Activated CD4-positive, alpha-beta T cell treated with anti-CD3 and anti-CD28 coated beads for 36 hours (primary cell): ENCODE measurements at regions of chr9 and their contacts with region 1.

Region 1: DNA sequence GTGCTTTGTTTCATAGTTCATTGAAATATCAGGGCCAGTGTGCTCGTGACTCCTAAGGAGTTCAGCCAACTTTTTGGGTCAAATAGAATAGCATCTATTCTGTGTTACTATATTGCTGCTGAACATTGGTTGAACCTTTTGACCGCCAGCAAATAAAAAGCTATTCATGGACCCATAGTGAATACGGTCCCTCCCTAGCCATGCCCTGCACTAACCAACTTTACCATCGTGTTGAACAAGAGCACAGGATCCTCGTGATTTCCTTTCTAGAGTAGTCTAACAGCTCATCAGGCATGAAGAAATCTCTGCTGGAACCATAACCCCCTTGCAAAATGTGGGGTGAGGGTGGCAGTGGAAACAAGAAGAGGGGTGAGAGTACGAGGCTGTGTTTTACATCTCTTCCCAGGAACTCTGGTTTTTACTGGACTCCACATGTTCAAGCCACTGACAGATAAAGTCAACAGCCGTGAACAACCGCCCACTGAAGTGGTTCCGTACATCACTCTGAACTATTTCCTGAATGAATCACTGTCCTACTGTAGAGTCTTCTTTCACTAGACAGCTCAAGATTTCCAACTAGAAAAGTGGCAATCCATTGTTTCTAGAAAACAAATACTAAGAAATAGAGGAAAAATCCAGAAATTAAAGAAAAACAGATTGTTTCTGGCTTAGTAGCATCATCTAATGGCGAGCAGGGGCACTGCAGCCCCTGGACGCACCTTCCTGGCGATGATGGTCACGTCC is 70.1 kb upstream of the SPATA31E1 start:
- DNase-seq: peak; percentile 77
- ATAC-seq: peak; percentile 93
- H3K4me3 Mint-ChIP-seq: no peak overlapping the region
- H3K27ac Mint-ChIP-seq: no peak overlapping the region
- H3K4me1 Mint-ChIP-seq: peaks cover 24% of the 10 kb centered on the region
- H3K27me3 Mint-ChIP-seq: peaks cover 12% of the 10 kb centered on the region

Region 2: GRCh38 chr9:87336914-87337333 is 475.6 kb before region 1 on chr9:
- CTCF ChIA-PET with region 1: no interaction called
- POLR2A ChIA-PET with region 1: no interaction called
- intact Hi-C with region 1: loop called (anchors 1 to 5 kb)
- DNase-seq: peak; percentile 49
- ATAC-seq: peak; percentile 57
- H3K4me3 Mint-ChIP-seq: peak overlapping the region; percentile 41
- H3K27ac Mint-ChIP-seq: peak overlapping the region; percentile 38
- H3K4me1 Mint-ChIP-seq: peaks cover 13% of the 10 kb centered on the region
- H3K27me3 Mint-ChIP-seq: peaks cover 47% of the 10 kb centered on the region

Region 3: GRCh38 chr9:87497604-87498045 is 314.9 kb before region 1 on chr9 and contains the start of gene DAPK1:
- CTCF ChIA-PET with region 1: interaction called, 3 read pairs
- POLR2A ChIA-PET with region 1: no interaction called
- intact Hi-C with region 1: loop called in 1 of 2 experiments (anchors 5 kb)
- DNase-seq: peak; percentile 60
- ATAC-seq: peak; percentile 61
- H3K4me3 Mint-ChIP-seq: peak within 1 kb of the TSS; percentile 70
- H3K27ac Mint-ChIP-seq: no peak within 1 kb of the TSS
- H3K4me1 Mint-ChIP-seq: peaks cover 24% of the 10 kb centered on the region
- H3K27me3 Mint-ChIP-seq: peaks cover 52% of the 10 kb centered on the region
- total RNA-seq, gene DAPK1: 3.9 to 5.6 TPM

Region 4: DNA sequence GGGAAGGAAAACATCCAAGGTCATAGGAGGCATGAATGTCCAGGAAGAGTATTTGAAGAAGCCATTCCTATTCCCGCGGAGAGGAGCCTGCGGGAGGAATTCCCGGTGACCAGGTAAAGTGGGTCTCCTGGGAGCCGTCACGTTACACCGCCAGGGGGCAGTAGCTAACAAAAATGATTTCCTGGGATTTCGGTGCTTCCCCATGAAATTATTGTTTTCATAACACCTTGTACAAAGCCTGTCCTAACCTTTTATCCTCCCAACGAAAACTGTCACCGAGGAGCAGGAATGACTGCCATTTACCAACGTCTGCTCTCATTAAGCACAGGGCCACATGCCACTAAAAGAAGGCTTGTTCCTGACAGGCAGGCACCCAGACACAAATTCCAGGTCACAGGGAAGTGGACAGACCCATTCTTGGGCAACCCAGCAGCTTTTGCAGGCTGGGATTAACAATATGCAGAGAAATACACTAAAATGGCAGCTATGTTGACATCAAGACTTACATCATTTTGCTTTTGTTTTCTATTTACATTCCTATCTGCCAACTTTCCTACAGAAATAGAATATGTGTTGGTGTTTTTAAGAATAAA is 127.8 kb before region 1 on chr9:
- CTCF ChIA-PET with region 1: interaction called, 6 read pairs
- POLR2A ChIA-PET with region 1: no interaction called
- intact Hi-C with region 1: loop called in 1 of 2 experiments (anchors 2 kb)
- DNase-seq: no peak
- ATAC-seq: no peak
- H3K4me3 Mint-ChIP-seq: no peak overlapping the region
- H3K27ac Mint-ChIP-seq: no peak overlapping the region
- H3K4me1 Mint-ChIP-seq: peaks cover 24% of the 10 kb centered on the region
- H3K27me3 Mint-ChIP-seq: no peaks in the 10 kb centered on the region

Region 5: DNA sequence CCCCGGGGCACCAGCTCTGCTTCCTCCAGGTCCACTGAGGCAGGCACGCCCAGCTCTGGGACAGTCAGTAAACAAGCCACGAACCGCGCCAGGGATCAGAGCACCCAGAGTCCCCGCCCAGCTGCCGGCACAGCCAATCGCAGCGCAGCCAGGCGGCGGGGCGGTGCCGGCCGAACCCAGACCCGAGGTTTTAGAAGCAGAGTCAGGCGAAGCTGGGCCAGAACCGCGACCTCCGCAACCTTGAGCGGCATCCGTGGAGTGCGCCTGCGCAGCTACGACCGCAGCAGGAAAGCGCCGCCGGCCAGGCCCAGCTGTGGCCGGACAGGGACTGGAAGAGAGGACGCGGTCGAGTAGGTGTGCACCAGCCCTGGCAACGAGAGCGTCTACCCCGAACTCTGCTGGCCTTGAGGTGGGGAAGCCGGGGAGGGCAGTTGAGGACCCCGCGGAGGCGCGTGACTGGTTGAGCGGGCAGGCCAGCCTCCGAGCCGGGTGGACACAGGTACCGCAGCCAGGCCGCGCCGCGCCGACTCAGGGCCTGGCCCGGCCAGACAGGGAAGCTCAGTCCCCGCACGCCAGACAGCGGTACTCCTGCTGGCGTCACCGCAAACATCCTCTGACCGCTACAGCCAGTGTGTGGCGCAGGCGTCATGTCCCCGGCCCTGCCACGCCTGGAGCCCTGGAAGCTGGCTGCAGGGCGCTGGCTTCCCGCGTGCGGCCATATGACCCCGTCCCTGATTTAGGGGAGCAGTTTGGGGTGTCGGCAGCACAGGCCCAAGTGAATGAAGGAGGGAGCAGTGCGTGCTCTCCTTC is 86.4 kb before region 1 on chr9 and contains the start of gene CTSL:
- CTCF ChIA-PET with region 1: no interaction called
- POLR2A ChIA-PET with region 1: no interaction called
- intact Hi-C with region 1: loop called in 1 of 2 experiments (anchors 5 kb)
- DNase-seq: peak; percentile 65
- ATAC-seq: peak; percentile 90
- H3K4me3 Mint-ChIP-seq: peak within 1 kb of the TSS; percentile 79
- H3K27ac Mint-ChIP-seq: peak within 1 kb of the TSS; percentile 66
- H3K4me1 Mint-ChIP-seq: peaks cover 37% of the 10 kb centered on the region
- H3K27me3 Mint-ChIP-seq: peaks cover 5% of the 10 kb centered on the region
- total RNA-seq, gene CTSL: 4.6 to 6.1 TPM

Region 6: GRCh38 chr9:87787735-87788134 is 24.8 kb before region 1 on chr9:
- CTCF ChIA-PET with region 1: no interaction called
- POLR2A ChIA-PET with region 1: no interaction called
- intact Hi-C with region 1: no loop called
- DNase-seq: no peak
- ATAC-seq: no peak
- H3K4me3 Mint-ChIP-seq: no peak overlapping the region
- H3K27ac Mint-ChIP-seq: no peak overlapping the region
- H3K4me1 Mint-ChIP-seq: peaks cover 8% of the 10 kb centered on the region
- H3K27me3 Mint-ChIP-seq: peaks cover 2% of the 10 kb centered on the region

Region 7: DNA sequence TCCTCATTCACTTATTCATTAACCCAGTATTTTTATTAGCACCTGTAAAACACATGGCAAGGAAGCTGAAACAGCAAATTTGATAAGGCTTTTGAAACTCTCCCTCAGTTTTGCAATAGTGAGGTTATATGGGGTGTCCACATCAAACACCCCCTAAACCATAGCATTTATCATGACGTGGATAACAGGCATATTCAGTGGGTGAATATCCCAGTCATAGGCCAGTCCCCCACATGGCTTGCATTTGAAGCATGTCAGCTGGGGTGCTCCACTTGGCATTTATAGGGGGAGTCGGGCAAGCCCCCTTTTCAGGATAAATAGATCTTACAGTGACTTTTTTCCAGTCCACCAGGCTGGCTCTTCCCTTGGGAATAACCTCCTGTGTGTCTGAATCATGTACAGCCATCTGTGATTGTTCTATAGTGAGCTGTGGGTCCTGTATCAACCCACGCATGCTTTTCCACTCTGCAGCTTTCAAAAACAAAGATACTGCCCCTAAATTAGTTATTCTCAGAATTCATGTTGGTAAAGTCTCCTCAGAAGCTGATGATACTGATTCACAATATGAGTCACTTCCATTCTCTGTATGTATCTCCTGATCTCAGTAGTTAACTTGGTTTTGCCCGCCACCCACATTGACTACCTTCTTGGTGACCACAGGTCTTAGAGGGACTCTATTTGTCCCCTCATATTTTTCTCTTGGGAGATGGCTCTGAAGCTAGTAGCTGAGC is 491.3 kb after region 1 on chr9:
- CTCF ChIA-PET with region 1: no interaction called
- POLR2A ChIA-PET with region 1: no interaction called
- intact Hi-C with region 1: loop called in 1 of 2 experiments (anchors 2 kb)
- DNase-seq: peak; percentile 81
- ATAC-seq: peak; percentile 91
- H3K4me3 Mint-ChIP-seq: no peak overlapping the region
- H3K27ac Mint-ChIP-seq: peak overlapping the region; percentile 68
- H3K4me1 Mint-ChIP-seq: peaks cover 27% of the 10 kb centered on the region
- H3K27me3 Mint-ChIP-seq: peaks cover 18% of the 10 kb centered on the region